Naive thymus-derived CD4-positive, alpha-beta T cell (primary cell): ENCODE measurements at regions of chr19 and their contacts with region 1.

Region 1: GRCh38 chr19:3224346-3225168 is at the start of gene CELF5:
- DNase-seq: peak in 8 of 9 donors; percentile 44 to 72 (median 58)
- ATAC-seq: peak; percentile 90
- H3K4me3 ChIP-seq: no peak within 1 kb of the TSS
- H3K4me3 Mint-ChIP-seq: peak within 1 kb of the TSS in 9 of 10 donors; percentile 30 to 75 (median 47)
- H3K27ac ChIP-seq: no peak within 1 kb of the TSS
- H3K27ac Mint-ChIP-seq: peak within 1 kb of the TSS in 1 of 9 donors; percentile 31
- H3K4me1 ChIP-seq: no peaks in the 10 kb centered on the region
- H3K4me1 Mint-ChIP-seq: peaks cover 0 to 6% (median 0%) of the 10 kb centered on the region in 7 donors
- H3K27me3 ChIP-seq: no peaks in the 10 kb centered on the region
- H3K27me3 Mint-ChIP-seq: peaks cover 15 to 41% (median 19%) of the 10 kb centered on the region in 5 donors
- total RNA-seq, gene CELF5: 0.16 to 0.27 (median 0.17) TPM

Region 2: DNA sequence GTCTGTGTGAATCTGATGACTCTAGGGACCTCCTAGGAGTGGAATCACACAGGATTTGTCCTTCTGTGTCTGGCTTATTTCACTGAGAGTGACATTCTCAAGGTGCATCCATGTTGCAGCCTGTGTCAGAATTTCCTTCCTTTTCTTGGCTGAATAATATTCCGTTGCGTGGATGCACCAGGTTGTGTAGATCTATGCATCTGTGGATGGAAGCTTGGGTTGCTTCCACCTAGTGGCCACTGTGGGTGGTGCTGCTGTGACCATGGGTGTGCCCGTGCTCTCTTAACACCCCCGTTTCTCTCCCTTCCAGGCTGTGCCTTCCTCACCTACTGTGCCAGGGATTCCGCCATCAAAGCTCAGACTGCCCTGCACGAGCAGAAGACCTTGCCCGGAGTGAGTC is 26.1 kb after region 1 on chr19:
- CTCF ChIA-PET with region 1: interaction called, 3 read pairs
- POLR2A ChIA-PET with region 1: no interaction called
- intact Hi-C with region 1: loop called in 1 of 2 experiments (anchors 2 kb)
- DNase-seq: peak in 5 of 9 donors; percentile 23 to 35 (median 28)
- ATAC-seq: peak; percentile 73
- H3K4me3 ChIP-seq: no peak overlapping the region
- H3K4me3 Mint-ChIP-seq: no peak overlapping the region
- H3K27ac ChIP-seq: no peak overlapping the region
- H3K27ac Mint-ChIP-seq: no peak overlapping the region
- H3K4me1 ChIP-seq: no peaks in the 10 kb centered on the region
- H3K4me1 Mint-ChIP-seq: no peaks in the 10 kb centered on the region
- H3K27me3 ChIP-seq: no peaks in the 10 kb centered on the region
- H3K27me3 Mint-ChIP-seq: peaks cover 0 to 23% (median 16%) of the 10 kb centered on the region in 5 donors

Region 3: DNA sequence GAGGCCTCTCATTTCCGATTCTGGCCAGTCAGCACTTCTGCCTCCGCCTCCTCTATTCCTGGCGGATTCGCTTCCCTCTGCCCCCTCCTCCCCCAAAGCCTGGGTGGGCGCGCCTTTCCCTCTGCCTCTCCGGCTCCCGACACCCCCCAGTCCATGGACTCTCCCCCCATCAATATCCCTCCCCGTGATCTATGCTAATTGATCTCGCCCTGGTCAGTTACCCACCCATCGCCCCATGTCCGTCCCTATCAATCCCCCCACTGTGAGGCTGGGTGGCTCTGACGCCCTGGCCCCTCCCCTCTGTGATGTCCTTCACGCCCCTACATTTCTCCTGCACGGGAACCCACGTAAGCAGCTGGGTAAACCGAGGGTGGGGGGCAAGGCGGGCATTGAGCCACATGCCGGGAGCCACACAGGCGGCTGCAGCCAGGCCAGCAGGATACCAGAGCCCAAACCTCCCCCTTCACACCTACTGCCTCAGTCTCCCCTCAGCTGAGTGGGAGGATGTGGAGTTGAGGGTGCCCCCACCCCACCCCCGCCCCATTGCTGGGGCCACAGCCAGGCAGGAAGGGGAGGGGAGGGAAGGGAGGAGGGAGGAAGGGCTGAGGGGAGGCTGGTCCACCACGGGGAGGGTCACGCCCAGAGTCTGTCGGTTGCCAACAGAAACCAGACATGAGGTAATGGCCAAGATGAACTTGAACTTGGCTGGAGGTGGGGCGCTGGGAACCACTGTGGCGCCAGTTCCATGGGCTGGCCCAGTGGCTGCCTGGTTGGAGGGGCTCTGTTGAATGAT is 234.7 kb after region 1 on chr19:
- CTCF ChIA-PET with region 1: no interaction called
- POLR2A ChIA-PET with region 1: no interaction called
- intact Hi-C with region 1: no loop called
- DNase-seq: no peak
- ATAC-seq: peak; percentile 54
- H3K4me3 ChIP-seq: no peak overlapping the region
- H3K4me3 Mint-ChIP-seq: no peak overlapping the region
- H3K27ac ChIP-seq: no peak overlapping the region
- H3K27ac Mint-ChIP-seq: no peak overlapping the region
- H3K4me1 ChIP-seq: no peaks in the 10 kb centered on the region
- H3K4me1 Mint-ChIP-seq: peaks cover 0 to 3% (median 0%) of the 10 kb centered on the region in 7 donors
- H3K27me3 ChIP-seq: no peaks in the 10 kb centered on the region
- H3K27me3 Mint-ChIP-seq: no peaks in the 10 kb centered on the region